GM12878 (cell line): ENCODE measurements at regions of chr5 and their contacts with region 1.

Region 1: DNA sequence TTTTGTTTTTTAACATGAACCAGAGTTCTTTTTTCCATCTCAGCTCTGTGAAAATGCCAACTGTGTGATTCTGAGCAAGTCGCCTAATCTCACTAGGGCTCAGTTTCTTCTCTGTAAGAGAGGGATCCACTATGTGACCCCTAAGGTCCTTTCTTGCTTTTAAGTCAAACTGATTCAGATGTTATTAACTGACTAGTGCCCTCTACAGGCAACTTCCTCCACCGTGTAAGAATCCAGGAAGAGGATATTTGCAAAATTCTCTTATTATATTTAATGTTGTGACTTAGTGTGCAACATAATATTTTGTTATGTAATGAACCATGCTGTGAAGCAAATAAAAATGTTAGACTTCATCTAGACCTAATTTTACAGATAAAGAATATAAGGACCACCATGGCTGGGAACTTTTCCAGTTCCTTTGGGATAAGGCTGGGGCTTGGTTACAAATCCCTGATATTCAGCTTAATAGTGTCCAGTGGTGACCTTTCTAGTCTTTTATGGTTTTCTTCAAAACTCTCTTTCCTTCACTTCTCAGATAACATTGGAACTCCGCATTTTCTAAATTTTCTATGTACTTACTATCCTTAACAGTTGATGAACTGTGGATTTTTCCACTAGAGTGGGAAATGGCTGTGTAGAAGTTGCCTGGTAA is 244.7 kb downstream of the PIK3R1 start:
- DNase-seq: no peak
- ATAC-seq: peak; percentile 86
- H3K4me3 ChIP-seq: no peak overlapping the region
- H3K27ac ChIP-seq: no peak overlapping the region
- H3K4me1 ChIP-seq: peaks cover 5% of the 10 kb centered on the region
- H3K27me3 ChIP-seq: no peaks in the 10 kb centered on the region
- CTCF ChIP-seq: peak; percentile 58 to 72 (median 68)
- EP300 ChIP-seq: no peak
- POLR2A ChIP-seq: no peak
- RAD21 ChIP-seq: peak; percentile 95

Region 2: GRCh38 chr5:67246108-67246507 is 1214.2 kb before region 1 on chr5:
- CTCF ChIA-PET with region 1: no interaction called
- POLR2A ChIA-PET with region 1: no interaction called
- RAD21 ChIA-PET with region 1: no interaction called
- SMC1A ChIA-PET with region 1: interaction called, 3 read pairs
- in situ Hi-C with region 1: loop called (anchors 10 kb)
- intact Hi-C with region 1: no loop called
- DNase-seq: peak; percentile 19
- ATAC-seq: peak; percentile 73
- H3K4me3 ChIP-seq: no peak overlapping the region
- H3K27ac ChIP-seq: no peak overlapping the region
- H3K4me1 ChIP-seq: no peaks in the 10 kb centered on the region
- H3K27me3 ChIP-seq: no peaks in the 10 kb centered on the region
- CTCF ChIP-seq: peak; percentile 52 to 65 (median 60); a peak in 5 of 6 replicates
- EP300 ChIP-seq: no peak
- POLR2A ChIP-seq: no peak
- RAD21 ChIP-seq: peak; percentile 83

Region 3: DNA sequence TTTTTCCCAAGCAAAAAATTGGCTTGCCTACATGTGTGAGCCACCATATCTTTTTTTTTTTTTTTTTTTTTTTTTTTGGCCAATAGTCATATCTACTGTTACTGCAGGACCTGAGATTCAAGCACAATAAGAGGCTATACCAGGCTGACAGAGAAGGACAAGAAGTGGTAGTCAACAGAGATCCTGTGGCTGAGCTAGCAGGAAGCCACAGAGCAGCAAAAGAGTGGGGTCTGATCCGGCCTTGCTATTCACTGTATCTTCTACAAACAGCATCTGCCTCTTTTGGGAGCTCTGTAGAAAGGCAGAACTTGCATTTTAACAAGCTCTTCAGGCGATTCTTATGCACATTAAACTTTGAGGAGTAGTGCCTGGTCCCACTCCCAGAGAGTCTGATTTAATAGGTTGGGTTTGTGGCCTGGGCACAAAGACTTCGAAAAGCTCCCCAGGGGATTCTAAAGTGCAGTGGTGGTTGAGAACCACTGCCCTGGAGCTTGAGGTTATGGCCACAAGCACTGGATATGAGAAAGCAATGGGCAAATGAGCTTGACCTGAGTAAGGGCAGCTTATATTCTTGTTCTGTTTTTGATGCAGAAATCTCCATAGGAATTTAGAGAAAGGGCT is 82.0 kb before region 1 on chr5:
- CTCF ChIA-PET with region 1: interaction called, 3 read pairs
- POLR2A ChIA-PET with region 1: no interaction called
- RAD21 ChIA-PET with region 1: interaction called, 6 read pairs
- SMC1A ChIA-PET with region 1: interaction called, 11 read pairs
- in situ Hi-C with region 1: no loop called
- intact Hi-C with region 1: loop called (anchors 5 kb)
- DNase-seq: peak; percentile 55
- ATAC-seq: peak; percentile 90
- H3K4me3 ChIP-seq: no peak overlapping the region
- H3K27ac ChIP-seq: peak overlapping the region; percentile 15; the same call in 1 of the 2 replicates
- H3K4me1 ChIP-seq: peaks cover 22% of the 10 kb centered on the region
- H3K27me3 ChIP-seq: no peaks in the 10 kb centered on the region; a peak in 1 of 4 replicates
- CTCF ChIP-seq: no peak
- EP300 ChIP-seq: no peak
- POLR2A ChIP-seq: no peak
- RAD21 ChIP-seq: no peak

Region 4: GRCh38 chr5:68433923-68434879 is 26.1 kb before region 1 on chr5:
- CTCF ChIA-PET with region 1: interaction called, 63 read pairs
- POLR2A ChIA-PET with region 1: interaction called, 6 read pairs
- RAD21 ChIA-PET with region 1: interaction called, 16 read pairs
- SMC1A ChIA-PET with region 1: interaction called, 17 read pairs
- in situ Hi-C with region 1: no loop called
- intact Hi-C with region 1: loop called (anchors 1 kb)
- DNase-seq: peak; percentile 99
- ATAC-seq: peak; percentile 96
- H3K4me3 ChIP-seq: no peak overlapping the region
- H3K27ac ChIP-seq: peak overlapping the region; percentile 97
- H3K4me1 ChIP-seq: peaks cover 58% of the 10 kb centered on the region
- H3K27me3 ChIP-seq: no peaks in the 10 kb centered on the region
- CTCF ChIP-seq: no peak
- EP300 ChIP-seq: peak; percentile 72 to 82; a peak in 3 of 4 replicates
- POLR2A ChIP-seq: peak; percentile 24; the same call in 1 of the 2 replicates
- RAD21 ChIP-seq: peak; percentile 33

Region 5: GRCh38 chr5:68446487-68446894 is 13.8 kb before region 1 on chr5:
- CTCF ChIA-PET with region 1: interaction called, 24 read pairs
- POLR2A ChIA-PET with region 1: interaction called, 6 read pairs
- RAD21 ChIA-PET with region 1: interaction called, 26 read pairs
- SMC1A ChIA-PET with region 1: interaction called, 23 read pairs
- in situ Hi-C with region 1: no loop called
- intact Hi-C with region 1: no loop called
- DNase-seq: peak; percentile 87
- ATAC-seq: peak; percentile 94
- H3K4me3 ChIP-seq: no peak overlapping the region
- H3K27ac ChIP-seq: peak overlapping the region; percentile 77
- H3K4me1 ChIP-seq: peaks cover 21% of the 10 kb centered on the region
- H3K27me3 ChIP-seq: no peaks in the 10 kb centered on the region
- CTCF ChIP-seq: no peak
- EP300 ChIP-seq: peak; percentile 60 to 84; a peak in 3 of 4 replicates
- POLR2A ChIP-seq: no peak
- RAD21 ChIP-seq: peak; percentile 34

Region 6: DNA sequence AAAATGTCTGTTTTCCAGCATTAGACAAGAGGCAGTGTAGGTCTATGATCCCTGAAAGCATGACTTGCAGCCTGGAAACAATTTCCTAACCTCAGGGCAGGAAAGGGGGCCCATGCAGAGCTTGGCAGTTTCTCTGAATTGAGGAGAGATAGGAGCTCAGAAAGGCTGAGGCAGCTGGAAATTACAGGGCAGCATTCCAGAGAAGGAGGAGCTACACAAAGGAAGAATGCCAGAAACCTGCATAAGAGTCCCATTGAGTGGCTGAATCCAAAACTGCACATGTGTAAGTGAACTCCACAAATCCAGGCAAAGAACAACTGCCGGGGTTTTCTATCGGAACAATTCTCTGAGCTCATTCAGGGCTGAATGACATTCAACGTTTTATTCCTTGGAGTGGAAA is 102.0 kb after region 1 on chr5:
- CTCF ChIA-PET with region 1: no interaction called
- POLR2A ChIA-PET with region 1: no interaction called
- RAD21 ChIA-PET with region 1: no interaction called
- SMC1A ChIA-PET with region 1: interaction called, 6 read pairs
- in situ Hi-C with region 1: no loop called
- intact Hi-C with region 1: loop called (anchors 2 kb)
- DNase-seq: no peak
- ATAC-seq: no peak
- H3K4me3 ChIP-seq: no peak overlapping the region
- H3K27ac ChIP-seq: no peak overlapping the region
- H3K4me1 ChIP-seq: peaks cover 6% of the 10 kb centered on the region; the same call in 1 of the 2 replicates
- H3K27me3 ChIP-seq: no peaks in the 10 kb centered on the region
- CTCF ChIP-seq: no peak
- EP300 ChIP-seq: no peak
- POLR2A ChIP-seq: no peak
- RAD21 ChIP-seq: no peak

Region 7: GRCh38 chr5:68745448-68745847 is 285.2 kb after region 1 on chr5:
- CTCF ChIA-PET with region 1: interaction called, 4 read pairs
- POLR2A ChIA-PET with region 1: no interaction called
- RAD21 ChIA-PET with region 1: no interaction called
- SMC1A ChIA-PET with region 1: interaction called, 3 read pairs
- in situ Hi-C with region 1: no loop called
- intact Hi-C with region 1: loop called (anchors 5 kb)
- DNase-seq: no peak
- ATAC-seq: peak; percentile 49; the same call in 1 of the 3 replicates
- H3K4me3 ChIP-seq: no peak overlapping the region
- H3K27ac ChIP-seq: no peak overlapping the region
- H3K4me1 ChIP-seq: 0 out of 2 replicates have a peak, but pooled peaks cover 3% of the 10 kb centered on the region
- H3K27me3 ChIP-seq: no peaks in the 10 kb centered on the region; a peak in 1 of 4 replicates
- CTCF ChIP-seq: peak; percentile 32 to 40 (median 38); a peak in 4 of 6 replicates
- EP300 ChIP-seq: no peak
- POLR2A ChIP-seq: no peak
- RAD21 ChIP-seq: peak; percentile 36; the same call in 1 of the 2 replicates